Activated CD8-positive, alpha-beta T cell treated with anti-CD3 and anti-CD28 coated beads, Interleukin-2, amount 10 ng/mL, durations not matched to agents 7 days and 5 days (primary cell): ENCODE measurements at regions of chr5 and their contacts with region 1.

Region 1: GRCh38 chr5:39376293-39376714 is 12.0 kb upstream of the C9 start:
- DNase-seq: peak; percentile 55
- ATAC-seq: peak; percentile 75
- H3K4me3 Mint-ChIP-seq: no peak overlapping the region
- H3K27ac Mint-ChIP-seq: no peak overlapping the region
- H3K4me1 Mint-ChIP-seq: no peaks in the 10 kb centered on the region
- H3K27me3 Mint-ChIP-seq: peaks cover 8% of the 10 kb centered on the region

Region 2: DNA sequence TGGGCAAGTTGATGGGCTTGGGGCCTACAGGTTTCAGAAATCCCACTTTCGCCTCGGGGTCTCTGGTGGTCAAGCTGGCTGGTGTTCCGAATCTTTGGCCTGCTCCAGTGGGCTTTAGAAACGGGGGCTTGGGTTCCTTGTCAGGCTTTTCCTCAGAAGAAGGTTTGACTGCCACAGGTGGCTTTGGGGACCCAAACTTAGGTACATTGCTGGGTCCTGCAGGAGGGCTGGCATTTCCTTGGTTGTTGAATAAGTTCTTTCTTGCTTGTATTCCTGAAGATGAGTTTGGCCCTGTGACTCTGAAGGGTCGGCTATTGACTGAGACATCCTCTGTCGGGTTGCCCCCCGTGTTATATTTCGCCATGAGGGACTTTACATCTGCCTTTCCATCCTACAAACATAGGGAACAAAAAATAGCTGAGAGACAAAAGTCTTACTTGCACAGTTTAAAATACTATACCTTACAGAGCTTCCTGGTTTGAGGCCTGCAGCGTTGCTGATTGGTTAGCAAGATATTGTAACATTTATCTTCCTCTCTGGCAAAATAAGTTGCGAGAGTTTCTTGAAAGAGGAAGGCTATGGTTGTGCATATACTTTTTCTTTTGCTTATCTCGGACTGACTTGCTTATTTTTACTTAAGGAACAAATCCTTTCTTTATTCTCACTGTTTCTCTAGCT is 173.6 kb before region 1 on chr5:
- CTCF ChIA-PET with region 1: interaction called, 13 read pairs
- POLR2A ChIA-PET with region 1: no interaction called
- DNase-seq: peak; percentile 69
- ATAC-seq: peak; percentile 57
- H3K4me3 Mint-ChIP-seq: peak overlapping the region; percentile 86
- H3K27ac Mint-ChIP-seq: peak overlapping the region; percentile 86
- H3K4me1 Mint-ChIP-seq: peaks cover 41% of the 10 kb centered on the region
- H3K27me3 Mint-ChIP-seq: no peaks in the 10 kb centered on the region

Region 3: DNA sequence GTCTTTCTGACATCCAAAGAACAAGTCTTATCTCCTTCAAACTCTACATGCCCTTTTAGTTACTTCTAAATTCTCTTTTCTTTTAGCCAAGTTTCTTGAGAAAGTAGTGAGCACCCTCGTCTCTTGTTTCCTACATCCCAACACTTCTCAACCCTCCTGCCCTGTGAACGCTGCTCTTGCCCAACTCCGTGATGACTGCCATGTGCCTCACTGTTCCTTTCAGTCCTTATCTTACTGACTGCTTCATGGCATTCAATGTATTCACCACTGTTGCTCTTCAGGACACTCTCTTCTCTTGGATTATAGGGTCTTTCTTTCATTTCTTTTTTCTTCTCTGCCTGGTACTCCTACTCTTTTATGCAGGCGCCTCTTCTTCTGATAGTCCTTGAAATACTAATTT is 26.8 kb before region 1 on chr5:
- CTCF ChIA-PET with region 1: no interaction called
- POLR2A ChIA-PET with region 1: no interaction called
- DNase-seq: no peak
- ATAC-seq: no peak
- H3K4me3 Mint-ChIP-seq: no peak overlapping the region
- H3K27ac Mint-ChIP-seq: no peak overlapping the region
- H3K4me1 Mint-ChIP-seq: no peaks in the 10 kb centered on the region
- H3K27me3 Mint-ChIP-seq: peaks cover 7% of the 10 kb centered on the region

Region 4: DNA sequence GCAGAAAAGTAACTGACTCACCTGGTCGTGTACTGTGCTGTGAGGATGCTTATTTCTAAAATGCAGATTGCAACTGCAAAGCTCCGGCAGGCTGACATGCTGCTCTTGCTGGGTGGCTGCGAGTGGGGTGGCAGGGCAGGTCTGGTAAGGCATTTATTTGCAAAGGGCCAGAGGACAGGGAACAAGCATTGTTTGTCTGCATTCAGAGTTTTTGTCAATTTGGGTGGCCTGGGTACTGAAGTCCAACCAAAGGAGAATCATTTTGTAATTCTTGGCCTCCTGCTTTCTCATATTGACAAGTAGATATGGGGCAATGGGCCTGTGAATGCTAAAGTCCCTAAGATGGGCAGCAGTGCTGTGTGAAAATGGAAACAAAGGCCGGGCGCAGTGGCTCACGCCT is 11.9 kb before region 1 on chr5 and contains the start of gene C9:
- CTCF ChIA-PET with region 1: interaction called, 15 read pairs
- POLR2A ChIA-PET with region 1: no interaction called
- DNase-seq: no peak
- ATAC-seq: no peak
- H3K4me3 Mint-ChIP-seq: no peak within 1 kb of the TSS
- H3K27ac Mint-ChIP-seq: no peak within 1 kb of the TSS
- H3K4me1 Mint-ChIP-seq: no peaks in the 10 kb centered on the region
- H3K27me3 Mint-ChIP-seq: no peaks in the 10 kb centered on the region
- total RNA-seq, gene C9: not detected

Region 5: DNA sequence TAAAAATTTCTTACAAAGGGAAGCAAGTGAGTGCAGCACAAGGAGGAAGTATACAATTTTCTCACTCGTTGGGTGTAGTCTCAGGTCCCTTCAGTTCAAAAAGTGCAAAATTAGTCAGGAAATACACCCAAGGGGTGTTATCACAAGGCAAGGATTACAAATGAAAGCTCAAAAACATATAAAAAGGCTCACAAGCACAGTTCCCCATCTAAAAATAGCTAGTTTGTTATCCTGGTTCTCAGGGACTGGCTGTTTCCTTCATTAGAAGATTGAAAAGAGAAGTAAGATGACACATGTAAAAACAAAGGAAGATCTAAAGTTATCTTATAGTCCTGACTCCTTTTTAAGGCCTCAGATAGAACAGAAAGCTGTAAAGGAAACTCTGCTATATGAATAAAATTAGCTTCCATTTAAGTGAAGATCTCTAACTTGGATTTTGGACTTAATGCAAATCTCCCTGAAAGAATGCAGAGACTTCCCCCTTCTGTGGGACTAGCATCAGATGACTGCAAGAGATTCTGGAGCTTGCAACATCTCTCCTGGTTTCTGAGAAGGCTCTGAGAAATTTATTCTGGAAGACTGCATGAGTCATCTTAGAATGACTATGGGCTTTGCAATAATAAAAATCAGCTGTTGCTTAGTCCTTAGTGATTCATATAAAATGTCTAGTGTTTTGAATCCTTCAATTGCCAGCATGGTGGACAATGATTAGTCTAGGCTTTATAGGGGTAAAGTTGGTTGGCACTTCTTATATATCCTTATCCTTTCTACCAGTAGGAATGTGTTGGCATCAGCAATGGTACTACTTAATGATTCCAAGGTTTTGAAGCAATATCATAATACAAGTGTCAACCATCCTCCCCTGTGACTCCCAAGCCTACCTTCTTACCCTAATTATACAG is 23.1 kb after region 1 on chr5:
- CTCF ChIA-PET with region 1: interaction called, 10 read pairs
- POLR2A ChIA-PET with region 1: no interaction called
- DNase-seq: no peak
- ATAC-seq: no peak
- H3K4me3 Mint-ChIP-seq: no peak overlapping the region
- H3K27ac Mint-ChIP-seq: no peak overlapping the region
- H3K4me1 Mint-ChIP-seq: no peaks in the 10 kb centered on the region
- H3K27me3 Mint-ChIP-seq: no peaks in the 10 kb centered on the region

Region 6: DNA sequence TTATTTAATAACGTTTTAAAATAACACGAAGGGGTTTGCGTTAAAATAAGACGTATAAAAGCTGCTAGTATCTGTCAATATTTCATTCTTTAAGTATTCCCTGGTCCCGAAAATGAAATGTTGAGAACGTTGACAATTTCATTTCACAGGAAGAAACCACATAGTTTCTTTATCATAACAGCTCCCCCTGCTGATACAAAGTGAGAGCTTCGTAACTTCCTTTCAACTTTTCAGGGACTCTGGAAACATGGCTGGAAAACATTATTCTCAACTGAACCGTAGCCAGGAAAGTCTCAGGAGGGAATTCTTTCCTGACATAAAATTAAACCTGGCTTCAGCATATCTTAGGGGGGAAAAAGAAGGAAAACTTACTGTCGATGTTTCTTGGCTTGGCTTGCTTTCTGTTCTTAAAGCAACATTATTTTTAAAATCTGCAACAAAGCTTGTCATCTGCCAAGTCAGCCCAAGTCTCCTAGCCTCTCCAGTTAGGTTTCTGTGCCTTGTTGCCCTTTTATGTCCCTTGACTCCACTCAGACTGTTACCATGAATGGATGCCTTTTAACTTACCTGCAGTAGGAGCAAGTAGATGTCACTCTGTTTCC is 171.3 kb after region 1 on chr5:
- CTCF ChIA-PET with region 1: interaction called, 66 read pairs
- POLR2A ChIA-PET with region 1: no interaction called
- DNase-seq: peak; percentile 34
- ATAC-seq: no peak
- H3K4me3 Mint-ChIP-seq: no peak overlapping the region
- H3K27ac Mint-ChIP-seq: no peak overlapping the region
- H3K4me1 Mint-ChIP-seq: peaks cover 4% of the 10 kb centered on the region
- H3K27me3 Mint-ChIP-seq: peaks cover 8% of the 10 kb centered on the region